Testis (tissue), 5 donors: ENCODE measurements at regions of chr5 and their contacts with region 1.

Region 1: DNA sequence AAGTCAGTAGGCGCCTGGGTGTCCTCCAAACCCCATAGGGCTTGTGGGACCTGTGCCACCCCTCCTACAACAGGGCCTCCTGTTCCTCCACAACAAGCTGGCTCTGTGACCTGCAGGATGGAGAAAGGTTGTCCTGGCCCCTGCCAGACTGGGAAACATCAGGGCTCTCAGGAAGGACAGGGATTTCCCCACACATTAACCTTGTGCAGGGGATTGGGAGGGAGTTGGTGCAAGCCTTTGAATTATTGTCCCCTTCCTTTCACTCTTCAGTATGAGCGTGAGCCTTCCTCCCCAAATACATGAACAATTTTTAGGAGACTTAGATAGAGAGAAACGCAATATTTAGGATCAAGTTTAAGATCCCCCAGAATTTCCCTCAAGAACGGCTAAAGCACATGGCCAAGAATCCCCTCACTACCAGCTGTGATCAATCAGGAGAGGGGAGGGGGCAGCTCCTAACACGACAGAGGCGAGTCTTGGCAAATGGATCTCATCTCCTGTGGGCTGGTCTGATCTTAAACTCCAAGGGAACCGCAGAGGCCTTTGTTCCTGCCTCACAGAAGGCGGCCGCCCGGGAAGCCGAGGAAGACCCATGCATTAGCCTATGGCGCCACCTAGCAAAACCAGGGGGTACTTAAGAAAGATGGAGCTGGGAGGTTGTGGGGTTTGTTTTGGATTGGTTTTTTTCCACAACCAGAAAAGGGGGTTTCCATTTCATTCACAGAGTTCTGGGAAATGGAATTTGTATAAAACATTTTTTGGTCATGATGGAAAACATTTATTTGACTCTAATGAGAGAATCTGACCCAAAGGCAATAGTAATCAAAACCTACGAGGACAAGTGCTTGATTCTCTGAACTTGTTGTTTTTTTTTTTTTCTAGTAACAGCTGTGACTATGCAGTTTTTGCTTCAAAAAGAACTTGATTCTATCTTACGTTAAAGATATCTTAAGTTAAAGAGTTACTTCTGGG is 36.1 kb upstream of the OSMR start:
- DNase-seq: peak; percentile 93
- H3K4me3 ChIP-seq: peak overlapping the region in 1 of 2 donors; percentile 32
- H3K27ac ChIP-seq: peak overlapping the region; percentile 43 to 58
- H3K4me1 ChIP-seq: no peaks in the 10 kb centered on the region
- H3K27me3 ChIP-seq: no peaks in the 10 kb centered on the region
- CTCF ChIP-seq: peak; percentile 71 to 85 (median 81)
- POLR2A ChIP-seq: no peak

Region 2: GRCh38 chr5:38382898-38383297 is 426.8 kb before region 1 on chr5:
- intact Hi-C with region 1: loop called (anchors 5 kb)
- DNase-seq: peak; percentile 72
- H3K4me3 ChIP-seq: no peak overlapping the region
- H3K27ac ChIP-seq: no peak overlapping the region
- H3K4me1 ChIP-seq: no peaks in the 10 kb centered on the region
- H3K27me3 ChIP-seq: no peaks in the 10 kb centered on the region
- CTCF ChIP-seq: peak; percentile 31 to 70 (median 59)
- POLR2A ChIP-seq: no peak

Region 3: DNA sequence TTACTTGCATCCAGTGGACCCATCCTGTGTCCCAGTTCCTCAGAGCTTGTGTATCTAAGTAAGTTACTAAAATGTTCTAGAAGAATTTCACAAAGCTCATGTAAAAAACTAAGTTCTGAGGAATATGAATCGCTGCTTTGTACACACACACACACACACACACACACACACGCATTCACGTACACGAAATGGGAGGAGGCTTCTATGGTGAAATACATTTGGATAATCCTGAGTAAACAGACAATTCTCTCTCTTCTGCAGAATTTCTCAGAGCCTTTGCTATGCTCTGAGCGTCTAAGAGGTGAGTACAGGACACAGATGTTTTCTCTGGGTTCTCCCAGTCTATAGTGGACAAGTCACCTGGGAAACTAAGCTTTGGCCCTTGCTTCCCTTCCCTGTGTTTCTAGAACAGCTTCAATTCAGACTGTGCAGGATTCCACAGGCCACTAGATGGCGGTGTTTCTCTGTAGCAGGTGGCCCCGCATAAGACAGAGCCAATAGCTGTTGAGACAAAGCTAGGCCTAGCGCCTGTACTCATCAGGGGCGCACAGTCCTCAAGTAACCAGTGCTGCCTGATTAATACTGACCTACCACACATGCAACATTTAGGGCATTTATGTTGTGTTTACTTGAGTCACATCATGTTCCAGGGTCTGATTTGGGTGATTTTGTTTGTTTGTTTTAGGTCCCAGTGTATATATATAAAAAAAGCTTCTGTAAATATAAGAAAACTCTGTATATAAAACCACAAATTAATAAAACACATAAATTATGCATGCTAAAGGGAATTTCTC is 368.0 kb before region 1 on chr5:
- intact Hi-C with region 1: loop called (anchors 10 kb)
- DNase-seq: peak; percentile 96
- H3K4me3 ChIP-seq: no peak overlapping the region
- H3K27ac ChIP-seq: no peak overlapping the region
- H3K4me1 ChIP-seq: no peaks in the 10 kb centered on the region
- H3K27me3 ChIP-seq: no peaks in the 10 kb centered on the region
- CTCF ChIP-seq: peak; percentile 91 to 96 (median 96)
- POLR2A ChIP-seq: no peak

Region 4: GRCh38 chr5:38831909-38832308 is 22.2 kb after region 1 on chr5:
- intact Hi-C with region 1: no loop called
- DNase-seq: no peak
- H3K4me3 ChIP-seq: no peak overlapping the region
- H3K27ac ChIP-seq: no peak overlapping the region
- H3K4me1 ChIP-seq: no peaks in the 10 kb centered on the region
- H3K27me3 ChIP-seq: no peaks in the 10 kb centered on the region
- CTCF ChIP-seq: peak; percentile 7 to 49 (median 18)
- POLR2A ChIP-seq: no peak